HCT116 (cell line): ENCODE measurements at regions of chr7 and their contacts with region 1.

Region 1: DNA sequence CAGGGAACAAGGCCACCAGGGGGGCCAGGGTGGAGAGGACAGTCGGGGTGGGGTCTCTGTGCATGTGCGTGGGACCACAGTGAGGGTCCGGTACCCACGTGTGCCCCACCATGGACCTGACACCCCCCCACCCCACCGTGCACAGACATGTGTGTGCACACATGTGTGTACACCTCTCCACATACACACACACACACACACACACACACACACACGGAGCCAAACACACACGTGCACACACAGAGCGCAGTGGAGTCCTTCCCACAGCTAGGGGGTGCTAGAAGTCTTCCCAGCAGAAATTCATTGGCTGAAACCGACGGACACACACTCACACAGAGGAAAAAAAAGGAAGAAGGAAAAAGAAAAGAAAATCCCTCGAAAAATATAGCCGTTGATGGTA is 42.8 kb upstream of the GNA12 start:
- DNase-seq: peak; percentile 73
- ATAC-seq: peak; percentile 91
- H3K4me3 ChIP-seq: no peak overlapping the region
- H3K27ac ChIP-seq: no peak overlapping the region
- H3K4me1 ChIP-seq: no peaks in the 10 kb centered on the region
- H3K27me3 ChIP-seq: no peaks in the 10 kb centered on the region
- CTCF ChIP-seq: peak; percentile 86 to 96 (median 93)
- POLR2A ChIP-seq: no peak
- RAD21 ChIP-seq: peak; percentile 94

Region 2: GRCh38 chr7:3154912-3155494 is 268.1 kb after region 1 on chr7:
- CTCF ChIA-PET with region 1: no interaction called
- POLR2A ChIA-PET with region 1: no interaction called
- RAD21 ChIA-PET with region 1: no interaction called
- intact Hi-C with region 1: loop called (anchors 1 kb)
- DNase-seq: peak; percentile 32
- ATAC-seq: peak; percentile 72
- H3K4me3 ChIP-seq: no peak overlapping the region
- H3K27ac ChIP-seq: no peak overlapping the region
- H3K4me1 ChIP-seq: no peaks in the 10 kb centered on the region
- H3K27me3 ChIP-seq: peaks cover 3% of the 10 kb centered on the region; the same call in 1 of the 2 replicates
- CTCF ChIP-seq: peak; percentile 56 to 67 (median 66)
- POLR2A ChIP-seq: no peak
- RAD21 ChIP-seq: peak; percentile 77

Region 3: GRCh38 chr7:3200504-3200903 is 313.6 kb after region 1 on chr7:
- CTCF ChIA-PET with region 1: no interaction called
- POLR2A ChIA-PET with region 1: no interaction called
- RAD21 ChIA-PET with region 1: no interaction called
- intact Hi-C with region 1: loop called (anchors 1 kb)
- DNase-seq: peak; percentile 12
- ATAC-seq: peak; percentile 92
- H3K4me3 ChIP-seq: no peak overlapping the region
- H3K27ac ChIP-seq: no peak overlapping the region
- H3K4me1 ChIP-seq: no peaks in the 10 kb centered on the region
- H3K27me3 ChIP-seq: no peaks in the 10 kb centered on the region
- CTCF ChIP-seq: peak; percentile 37 to 71 (median 58); a peak in 5 of 6 replicates
- POLR2A ChIP-seq: no peak
- RAD21 ChIP-seq: peak; percentile 68

Region 4: GRCh38 chr7:3399858-3400257 is 513.0 kb after region 1 on chr7:
- CTCF ChIA-PET with region 1: interaction called, 3 read pairs
- POLR2A ChIA-PET with region 1: no interaction called
- RAD21 ChIA-PET with region 1: no interaction called
- intact Hi-C with region 1: loop called (anchors 1 kb)
- DNase-seq: peak; percentile 49
- ATAC-seq: peak; percentile 99
- H3K4me3 ChIP-seq: no peak overlapping the region
- H3K27ac ChIP-seq: no peak overlapping the region
- H3K4me1 ChIP-seq: no peaks in the 10 kb centered on the region
- H3K27me3 ChIP-seq: peaks cover 8% of the 10 kb centered on the region; the same call in 1 of the 2 replicates
- CTCF ChIP-seq: peak; percentile 56 to 94 (median 59)
- POLR2A ChIP-seq: no peak
- RAD21 ChIP-seq: peak; percentile 51

Region 5: GRCh38 chr7:3673524-3673923 is 786.6 kb after region 1 on chr7:
- CTCF ChIA-PET with region 1: interaction called, 8 read pairs
- POLR2A ChIA-PET with region 1: no interaction called
- RAD21 ChIA-PET with region 1: no interaction called
- intact Hi-C with region 1: loop called (anchors 2 kb)
- DNase-seq: no peak
- ATAC-seq: peak; percentile 71; the same call in 1 of the 2 replicates
- H3K4me3 ChIP-seq: no peak overlapping the region
- H3K27ac ChIP-seq: no peak overlapping the region
- H3K4me1 ChIP-seq: no peaks in the 10 kb centered on the region
- H3K27me3 ChIP-seq: peaks cover 13% of the 10 kb centered on the region; the same call in 1 of the 2 replicates
- CTCF ChIP-seq: peak; percentile 52 to 72 (median 67); a peak in 5 of 6 replicates
- POLR2A ChIP-seq: no peak
- RAD21 ChIP-seq: peak; percentile 48

Region 6: GRCh38 chr7:3897438-3898385 is 1010.8 kb after region 1 on chr7:
- CTCF ChIA-PET with region 1: no interaction called
- POLR2A ChIA-PET with region 1: no interaction called
- RAD21 ChIA-PET with region 1: no interaction called
- intact Hi-C with region 1: loop called (anchors 2 kb)
- DNase-seq: peak; percentile 29
- ATAC-seq: peak; percentile 73
- H3K4me3 ChIP-seq: no peak overlapping the region
- H3K27ac ChIP-seq: no peak overlapping the region
- H3K4me1 ChIP-seq: no peaks in the 10 kb centered on the region
- H3K27me3 ChIP-seq: peaks cover 41% of the 10 kb centered on the region
- CTCF ChIP-seq: peak; percentile 33 to 90 (median 71); a peak in 5 of 6 replicates
- POLR2A ChIP-seq: no peak
- RAD21 ChIP-seq: peak; percentile 59

Region 7: DNA sequence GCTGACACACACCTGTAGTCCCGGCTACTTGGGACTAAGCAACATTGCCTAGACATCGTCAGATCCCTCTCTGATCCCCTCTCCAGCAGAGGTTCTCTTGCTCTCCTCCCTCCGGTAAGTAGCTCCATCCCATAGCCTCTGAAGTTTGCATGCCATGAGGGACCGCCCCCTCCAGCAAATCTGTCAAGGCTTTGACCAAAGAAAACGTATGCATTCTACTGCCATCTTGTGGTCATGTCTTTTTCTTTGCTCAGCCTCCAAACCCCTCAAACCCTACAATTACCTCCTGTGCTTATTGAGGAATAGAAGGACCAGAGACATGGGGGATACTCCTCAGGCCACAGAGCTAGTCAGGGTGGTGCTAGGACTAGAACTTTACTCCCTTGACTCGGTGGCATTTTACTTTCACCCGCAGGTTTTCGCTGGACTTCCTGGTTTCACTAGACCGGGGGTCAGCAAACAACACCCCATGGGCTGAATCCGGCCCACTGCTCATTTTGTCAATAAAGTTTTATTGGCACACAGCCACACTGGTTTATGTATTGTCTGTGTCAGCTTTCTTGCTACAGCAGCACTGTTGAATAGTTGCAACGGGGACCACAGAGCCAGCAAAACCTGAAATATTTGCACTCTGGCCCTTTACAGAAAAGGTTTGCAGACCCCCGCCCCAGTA is 1592.6 kb after region 1 on chr7:
- CTCF ChIA-PET with region 1: no interaction called
- POLR2A ChIA-PET with region 1: no interaction called
- RAD21 ChIA-PET with region 1: no interaction called
- intact Hi-C with region 1: loop called (anchors 5 kb)
- DNase-seq: peak; percentile 73
- ATAC-seq: peak; percentile 97
- H3K4me3 ChIP-seq: no peak overlapping the region
- H3K27ac ChIP-seq: no peak overlapping the region
- H3K4me1 ChIP-seq: no peaks in the 10 kb centered on the region
- H3K27me3 ChIP-seq: peaks cover 3% of the 10 kb centered on the region; the same call in 1 of the 2 replicates
- CTCF ChIP-seq: peak; percentile 61 to 75 (median 68); a peak in 5 of 6 replicates
- POLR2A ChIP-seq: no peak
- RAD21 ChIP-seq: peak; percentile 70